Naive thymus-derived CD4-positive, alpha-beta T cell (primary cell): ENCODE measurements at regions of chr14 and their contacts with region 1.

Region 1: GRCh38 chr14:67111022-67111421 is 78.2 kb upstream of the GARIN2 start:
- DNase-seq: no peak
- ATAC-seq: no peak
- H3K4me3 ChIP-seq: no peak overlapping the region
- H3K4me3 Mint-ChIP-seq: no peak overlapping the region
- H3K27ac ChIP-seq: no peak overlapping the region
- H3K27ac Mint-ChIP-seq: no peak overlapping the region
- H3K4me1 ChIP-seq: no peaks in the 10 kb centered on the region
- H3K4me1 Mint-ChIP-seq: no peaks in the 10 kb centered on the region
- H3K27me3 ChIP-seq: no peaks in the 10 kb centered on the region
- H3K27me3 Mint-ChIP-seq: no peaks in the 10 kb centered on the region

Region 2: DNA sequence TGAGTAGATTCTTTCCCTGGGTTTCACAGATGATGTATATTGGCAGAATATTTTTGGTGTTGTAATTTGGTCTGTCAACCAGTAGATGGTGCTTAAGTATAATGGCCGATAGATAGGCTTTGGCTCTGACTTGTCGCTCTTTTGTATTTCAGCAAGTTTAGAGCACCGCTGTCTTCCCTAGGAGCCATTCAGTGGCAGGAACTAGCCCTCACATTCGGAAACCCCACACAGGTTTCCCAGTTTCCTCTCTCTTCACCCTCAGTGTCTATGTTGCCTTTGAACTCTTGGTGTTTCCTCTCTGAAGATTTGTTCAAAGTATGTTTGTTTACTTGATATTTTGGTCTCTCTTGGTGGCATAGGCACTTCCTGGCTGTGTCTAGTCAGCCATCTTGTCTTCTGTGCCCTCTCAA is 500.9 kb before region 1 on chr14:
- CTCF ChIA-PET with region 1: no interaction called
- POLR2A ChIA-PET with region 1: no interaction called
- intact Hi-C with region 1: loop called in 1 of 2 experiments (anchors 2 kb)
- DNase-seq: peak in 5 of 9 donors; percentile 1 to 46 (median 5)
- ATAC-seq: peak; percentile 24
- H3K4me3 ChIP-seq: no peak overlapping the region
- H3K4me3 Mint-ChIP-seq: peak overlapping the region in 2 of 10 donors; percentile 41 to 53
- H3K27ac ChIP-seq: no peak overlapping the region
- H3K27ac Mint-ChIP-seq: peak overlapping the region in 7 of 9 donors; percentile 9 to 85 (median 31)
- H3K4me1 ChIP-seq: no peaks in the 10 kb centered on the region
- H3K4me1 Mint-ChIP-seq: peaks cover 0 to 16% (median 14%) of the 10 kb centered on the region in 7 donors
- H3K27me3 ChIP-seq: no peaks in the 10 kb centered on the region
- H3K27me3 Mint-ChIP-seq: peaks cover 0 to 5% (median 0%) of the 10 kb centered on the region in 5 donors

Region 3: GRCh38 chr14:67166450-67166853 is 55.4 kb after region 1 on chr14:
- CTCF ChIA-PET with region 1: no interaction called
- POLR2A ChIA-PET with region 1: no interaction called
- intact Hi-C with region 1: no loop called
- DNase-seq: peak in 6 of 9 donors; percentile 26 to 39 (median 38)
- ATAC-seq: no peak
- H3K4me3 ChIP-seq: no peak overlapping the region
- H3K4me3 Mint-ChIP-seq: no peak overlapping the region
- H3K27ac ChIP-seq: no peak overlapping the region
- H3K27ac Mint-ChIP-seq: no peak overlapping the region
- H3K4me1 ChIP-seq: no peaks in the 10 kb centered on the region
- H3K4me1 Mint-ChIP-seq: peaks cover 0 to 8% (median 0%) of the 10 kb centered on the region in 7 donors
- H3K27me3 ChIP-seq: no peaks in the 10 kb centered on the region
- H3K27me3 Mint-ChIP-seq: no peaks in the 10 kb centered on the region